Sciatic nerve (tissue), 2 donors: ENCODE measurements at regions of chr7 and their contacts with region 1.

Region 1: GRCh38 chr7:35906191-35906908 is 105.5 kb downstream of the SEPTIN7 start:
- DNase-seq: peak; percentile 67
- ATAC-seq: peak; percentile 90

Region 2: DNA sequence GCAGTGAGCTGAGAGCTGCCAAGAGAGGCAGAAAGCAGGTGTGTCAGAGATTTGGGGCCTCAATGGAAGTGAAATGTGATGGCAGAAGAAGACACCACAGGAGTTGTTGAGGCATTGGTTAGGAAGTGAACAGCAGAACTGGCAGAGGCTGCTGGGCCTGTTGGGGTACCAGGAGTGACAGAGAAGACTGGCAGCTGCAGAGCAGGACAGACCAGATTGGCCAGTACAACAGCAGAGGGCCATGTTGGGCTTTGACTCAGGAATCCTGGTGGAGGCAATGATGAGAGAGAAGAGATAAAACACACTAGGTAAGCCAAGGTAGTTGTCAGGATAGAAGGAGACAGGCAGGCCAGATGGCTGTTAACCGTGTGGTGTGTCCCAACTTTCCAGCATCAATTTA is 191.5 kb before region 1 on chr7:
- intact Hi-C with region 1: loop called (anchors 5 kb)
- DNase-seq: no peak
- ATAC-seq: no peak